ENCODE measurements at regions of chr16 and their contacts with region 1.

Region 1: DNA sequence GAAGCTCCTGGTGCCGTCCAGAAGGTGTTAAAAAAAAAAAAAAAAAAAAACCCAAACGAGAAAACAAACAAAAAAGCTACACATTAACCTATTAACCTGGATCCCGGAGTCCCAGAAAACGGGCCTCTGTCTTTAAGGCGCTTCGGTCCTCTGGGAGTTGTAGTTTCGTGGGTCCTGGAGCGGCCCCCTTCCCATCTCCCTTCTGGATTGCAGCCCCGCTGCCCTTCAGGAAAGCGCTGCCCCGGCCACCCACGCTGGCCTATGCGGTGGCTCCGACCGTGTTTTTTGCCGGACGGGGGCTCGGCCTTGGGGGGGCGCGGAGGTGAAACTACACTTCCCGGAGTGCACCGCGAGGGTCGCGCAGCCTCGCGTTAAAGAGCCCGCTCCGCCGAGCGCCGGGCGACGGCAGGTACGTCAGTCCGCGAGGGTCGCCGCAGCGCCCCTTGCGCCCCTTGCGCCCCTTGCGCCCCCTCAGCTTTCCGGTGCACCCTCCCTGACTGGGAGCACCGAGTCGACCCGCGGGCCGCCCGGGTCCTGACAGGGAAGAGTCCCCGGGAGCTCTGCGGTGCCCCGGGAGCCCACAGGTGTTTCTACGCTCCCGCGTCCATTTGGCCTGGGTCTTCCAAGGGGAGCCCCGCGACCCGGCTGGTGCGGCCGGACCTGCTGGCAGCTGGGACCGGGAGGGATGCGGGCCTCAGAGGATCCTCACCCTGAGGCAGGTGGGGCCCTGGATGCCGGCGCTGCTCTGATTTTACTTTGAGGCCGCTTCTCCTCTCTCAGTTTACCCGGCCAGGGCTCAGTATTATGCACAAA is at the start of gene FCSK:
- DNase-seq: peak; percentile 77
- H3K4me3 ChIP-seq: peak within 1 kb of the TSS; percentile 67 to 97 (median 86)
- H3K27ac ChIP-seq: peak within 1 kb of the TSS; percentile 82 to 96 (median 90)
- H3K4me1 ChIP-seq: peaks cover 0 to 17% (median 14%) of the 10 kb centered on the region in 4 donors
- H3K27me3 ChIP-seq: peaks cover 0 to 8% (median 0%) of the 10 kb centered on the region in 3 donors
- CTCF ChIP-seq: no peak
- EP300 ChIP-seq: no peak
- POLR2A ChIP-seq: no peak
- total RNA-seq, gene FCSK: 7.8 to 13.3 (median 12.2) TPM

Region 2: GRCh38 chr16:70380861-70381603 is 73.4 kb before region 1 on chr16:
- intact Hi-C with region 1: loop called (anchors 1 kb)
- DNase-seq: peak; percentile 99
- H3K4me3 ChIP-seq: peak overlapping the region; percentile 45 to 72 (median 61)
- H3K27ac ChIP-seq: peak overlapping the region; percentile 73 to 92 (median 85)
- H3K4me1 ChIP-seq: peaks cover 0 to 23% (median 14%) of the 10 kb centered on the region in 4 donors
- H3K27me3 ChIP-seq: no peaks in the 10 kb centered on the region
- CTCF ChIP-seq: peak in 1 of 4 experiments; percentile 23
- EP300 ChIP-seq: no peak
- POLR2A ChIP-seq: peak in 1 of 2 donors; percentile 6

Region 3: DNA sequence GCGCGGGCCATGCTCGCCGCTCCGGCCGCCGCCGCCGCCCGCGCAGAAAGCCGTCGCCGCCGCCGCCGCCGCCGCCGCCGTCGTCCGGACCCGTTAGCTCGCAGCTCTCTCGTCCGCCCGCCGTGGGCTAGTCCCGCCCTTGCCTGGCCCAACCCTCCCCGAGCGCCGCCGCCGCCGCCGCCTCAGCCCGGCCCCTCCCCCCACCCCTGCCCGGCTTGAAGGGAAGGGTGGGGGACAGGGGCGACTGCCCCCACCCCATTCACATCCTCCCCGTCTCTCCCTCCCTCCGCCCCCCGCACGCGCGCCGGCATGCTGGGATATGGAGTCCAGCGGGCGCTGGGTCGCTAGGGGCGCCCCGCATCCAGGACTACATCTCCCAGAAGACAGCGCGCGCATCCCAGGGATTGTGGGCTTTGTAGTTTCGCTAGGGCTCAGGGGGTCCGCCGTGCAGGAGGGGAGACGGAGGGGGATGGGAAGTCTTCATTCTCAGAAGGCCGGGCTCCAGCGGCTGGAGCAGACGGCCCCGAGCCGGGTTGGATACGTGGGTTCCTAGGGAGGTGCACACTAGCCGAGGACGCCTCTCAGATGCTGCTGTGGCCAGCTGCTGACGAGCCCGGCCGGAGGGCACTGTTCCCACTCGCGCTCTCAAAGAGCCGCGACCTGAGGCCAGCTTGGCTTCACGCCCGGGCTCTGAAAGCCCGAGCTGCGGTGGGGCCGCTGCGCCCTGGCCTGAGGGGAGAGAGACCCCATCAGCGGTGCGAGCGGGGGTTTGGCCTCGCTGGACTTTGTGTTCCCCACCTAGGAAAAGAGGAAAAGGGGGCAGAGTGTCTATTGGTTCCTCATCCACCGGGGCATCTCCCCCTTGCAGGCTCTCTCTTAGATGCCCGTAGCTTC is 15.2 kb before region 1 on chr16 and contains the start of gene ST3GAL2:
- intact Hi-C with region 1: loop called (anchors 1 kb)
- DNase-seq: peak; percentile 98
- H3K4me3 ChIP-seq: peak within 1 kb of the TSS; percentile 50 to 95 (median 85)
- H3K27ac ChIP-seq: peak within 1 kb of the TSS; percentile 75 to 87 (median 79)
- H3K4me1 ChIP-seq: peaks cover 0 to 38% (median 32%) of the 10 kb centered on the region in 4 donors
- H3K27me3 ChIP-seq: no peaks in the 10 kb centered on the region
- CTCF ChIP-seq: no peak
- EP300 ChIP-seq: no peak
- POLR2A ChIP-seq: no peak
- total RNA-seq, gene ST3GAL2: 14.0 to 21.3 (median 16.6) TPM

Measured in sigmoid colon (tissue), 7 donors.